Right ventricle myocardium inferior (tissue), 1 donor: ENCODE measurements at regions of chr17 and their contacts with region 1.

Region 1: DNA sequence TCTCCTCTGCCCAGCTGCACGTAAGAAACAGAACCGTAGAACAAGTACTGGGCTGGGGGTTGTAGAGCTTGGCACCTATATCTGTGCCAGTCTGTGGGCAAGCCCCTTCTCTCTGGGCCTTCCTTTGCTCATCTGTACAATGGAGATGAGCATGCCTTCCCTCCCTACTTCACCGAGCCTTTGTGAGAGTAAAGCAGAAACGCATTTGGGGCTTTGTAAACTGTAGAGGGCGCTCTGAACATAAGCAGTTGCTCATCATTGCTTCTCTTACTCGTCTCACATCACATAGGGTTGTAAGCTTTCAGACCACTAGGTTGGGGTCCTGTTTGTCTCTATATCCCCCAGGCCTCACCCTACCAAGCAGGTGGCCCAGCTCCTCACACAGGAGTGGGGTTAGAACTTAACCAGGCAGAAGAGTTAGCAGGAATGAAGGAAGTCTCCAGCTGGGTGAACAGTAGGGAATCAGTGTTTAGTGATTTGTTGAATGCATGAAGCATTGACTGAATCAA is 15.1 kb downstream of the SAMD14 start:
- DNase-seq: no peak
- ATAC-seq: no peak

Region 2: GRCh38 chr17:50037321-50038071 is 77.4 kb before region 1 on chr17:
- intact Hi-C with region 1: no loop called
- DNase-seq: no peak
- ATAC-seq: peak; percentile 44

Region 3: GRCh38 chr17:50129728-50130558 is 15.0 kb after region 1 on chr17 and contains the start of gene SAMD14:
- intact Hi-C with region 1: no loop called
- DNase-seq: peak; percentile 65
- ATAC-seq: no peak
- total RNA-seq, gene SAMD14: 1.7 TPM

Region 4: GRCh38 chr17:50151041-50151936 is 36.4 kb after region 1 on chr17:
- intact Hi-C with region 1: loop called (anchors 5 kb)
- DNase-seq: peak; percentile 95
- ATAC-seq: peak; percentile 75

Region 5: DNA sequence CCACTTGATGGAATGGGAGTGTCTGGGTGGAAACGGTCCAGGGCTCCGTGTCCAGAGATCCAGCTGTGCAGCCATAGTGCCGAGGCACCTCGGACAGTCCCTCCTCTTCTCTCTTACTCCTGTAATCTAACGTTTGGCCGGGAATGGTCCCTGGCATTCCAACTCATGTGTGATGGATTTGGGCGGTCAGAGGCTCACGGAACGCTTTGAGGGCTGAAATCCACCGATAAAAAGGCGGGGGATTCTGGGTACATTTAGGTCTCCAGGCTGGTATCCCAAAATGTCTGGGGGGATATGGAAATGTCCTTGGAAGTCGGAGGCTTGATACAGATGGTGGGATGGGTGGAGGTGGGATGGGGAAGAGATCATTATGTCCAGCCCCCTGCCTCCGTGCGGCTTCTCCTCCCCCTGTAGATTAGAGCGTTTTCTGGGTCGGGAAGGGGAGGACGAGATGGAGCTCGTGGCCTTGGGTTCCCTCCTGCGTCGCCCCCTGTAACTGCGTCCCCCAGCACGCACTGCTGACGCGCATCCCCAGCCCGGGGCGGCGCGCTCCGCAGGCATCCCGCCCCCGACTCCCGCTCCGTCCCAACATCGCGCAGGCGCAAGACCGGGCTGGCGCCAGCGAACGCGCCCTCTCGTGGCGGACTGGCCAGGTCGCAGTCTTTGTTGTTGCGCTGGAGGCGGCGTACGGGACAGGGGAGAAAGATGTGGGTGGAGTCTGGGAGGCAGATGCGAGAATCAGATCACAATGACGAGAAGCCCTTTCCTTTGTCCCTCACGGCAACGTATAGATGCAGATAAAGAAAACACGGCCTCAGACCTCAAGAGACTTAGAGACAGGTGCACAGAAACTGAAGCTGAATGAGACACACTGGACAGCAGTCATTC is 46.4 kb after region 1 on chr17:
- intact Hi-C with region 1: loop called (anchors 5 kb)
- DNase-seq: peak; percentile 95
- ATAC-seq: peak; percentile 87